ENCODE measurements at regions of chr9 and their contacts with region 1.

Region 1: DNA sequence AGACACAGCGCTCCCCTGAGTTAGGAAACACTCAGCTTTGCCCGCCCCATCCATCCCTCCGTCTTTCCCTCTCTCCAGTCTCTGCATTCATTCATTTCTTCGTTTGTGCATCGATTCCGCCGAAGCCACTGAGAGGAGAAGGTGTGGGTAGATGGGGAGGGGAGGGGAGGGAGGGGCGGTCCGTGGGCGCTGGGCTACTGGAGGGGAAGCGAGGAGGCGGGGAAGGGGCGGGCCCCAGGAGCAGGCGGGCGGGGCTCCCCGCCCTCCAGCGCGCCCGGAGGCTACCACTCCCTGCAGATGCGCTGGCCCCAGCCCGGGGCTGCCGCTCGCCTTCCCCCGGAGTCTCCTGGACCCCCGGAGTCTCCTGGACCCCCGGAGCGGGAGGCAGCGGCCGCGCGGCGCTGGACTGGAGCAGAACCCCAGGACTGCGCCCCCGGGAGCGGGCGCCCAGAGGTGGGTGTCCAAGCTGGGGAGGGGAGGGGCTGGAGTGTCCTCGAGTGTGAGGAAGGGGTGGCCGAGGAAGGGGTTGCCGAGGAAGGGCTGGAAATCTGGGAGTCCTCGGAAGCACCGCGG is 159.5 kb downstream of the C9orf152 start:
- DNase-seq: peak; percentile 79
- ATAC-seq: peak; percentile 91
- H3K4me3 ChIP-seq: peak overlapping the region; percentile 71
- H3K27ac ChIP-seq: peak overlapping the region; percentile 88
- H3K4me1 ChIP-seq: peaks cover 9% of the 10 kb centered on the region
- H3K27me3 ChIP-seq: no peaks in the 10 kb centered on the region
- CTCF ChIP-seq: no peak
- POLR2A ChIP-seq: peak; percentile 95
- RAD21 ChIP-seq: peak; percentile 9; the same call in 1 of the 2 replicates

Region 2: DNA sequence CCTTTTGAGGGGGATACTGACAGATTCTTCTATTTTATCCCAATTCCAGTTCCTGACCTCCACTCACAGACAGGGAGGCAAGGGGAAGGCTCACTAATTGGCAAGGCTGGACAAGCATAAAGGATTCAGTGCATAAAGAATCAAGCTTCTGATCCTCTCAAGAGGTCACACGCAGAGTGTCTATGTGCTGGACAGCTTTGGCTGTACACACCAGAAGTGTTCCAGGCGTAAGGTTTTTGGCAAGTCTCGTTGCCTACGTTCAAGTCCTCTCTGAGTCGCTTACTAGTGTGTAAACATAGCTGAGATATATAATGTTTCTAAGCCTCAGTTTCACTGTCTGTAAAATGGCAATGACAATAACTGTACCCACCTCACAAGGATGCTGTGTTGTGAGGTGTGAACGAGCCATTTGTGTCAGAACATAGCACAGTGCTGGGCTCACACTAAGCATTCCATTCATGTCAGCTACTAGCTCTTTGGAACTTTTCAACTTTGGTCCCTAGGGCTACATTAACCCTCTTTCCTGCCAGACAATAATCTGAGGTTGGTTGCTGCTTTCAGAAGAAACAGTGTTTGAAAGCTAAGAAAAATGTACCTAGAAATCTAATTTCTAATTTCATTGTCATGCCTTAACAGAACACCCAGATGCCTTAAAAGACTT is 216.4 kb before region 1 on chr9:
- CTCF ChIA-PET with region 1: no interaction called
- POLR2A ChIA-PET with region 1: no interaction called
- dilution Hi-C with region 1: no loop called
- in situ Hi-C with region 1: no loop called
- intact Hi-C with region 1: no loop called
- DNase-seq: no peak
- ATAC-seq: no peak
- H3K4me3 ChIP-seq: no peak overlapping the region
- H3K27ac ChIP-seq: no peak overlapping the region
- H3K4me1 ChIP-seq: peaks cover 2% of the 10 kb centered on the region; the same call in 1 of the 2 replicates
- H3K27me3 ChIP-seq: no peaks in the 10 kb centered on the region
- CTCF ChIP-seq: no peak
- POLR2A ChIP-seq: no peak
- RAD21 ChIP-seq: no peak

Region 3: DNA sequence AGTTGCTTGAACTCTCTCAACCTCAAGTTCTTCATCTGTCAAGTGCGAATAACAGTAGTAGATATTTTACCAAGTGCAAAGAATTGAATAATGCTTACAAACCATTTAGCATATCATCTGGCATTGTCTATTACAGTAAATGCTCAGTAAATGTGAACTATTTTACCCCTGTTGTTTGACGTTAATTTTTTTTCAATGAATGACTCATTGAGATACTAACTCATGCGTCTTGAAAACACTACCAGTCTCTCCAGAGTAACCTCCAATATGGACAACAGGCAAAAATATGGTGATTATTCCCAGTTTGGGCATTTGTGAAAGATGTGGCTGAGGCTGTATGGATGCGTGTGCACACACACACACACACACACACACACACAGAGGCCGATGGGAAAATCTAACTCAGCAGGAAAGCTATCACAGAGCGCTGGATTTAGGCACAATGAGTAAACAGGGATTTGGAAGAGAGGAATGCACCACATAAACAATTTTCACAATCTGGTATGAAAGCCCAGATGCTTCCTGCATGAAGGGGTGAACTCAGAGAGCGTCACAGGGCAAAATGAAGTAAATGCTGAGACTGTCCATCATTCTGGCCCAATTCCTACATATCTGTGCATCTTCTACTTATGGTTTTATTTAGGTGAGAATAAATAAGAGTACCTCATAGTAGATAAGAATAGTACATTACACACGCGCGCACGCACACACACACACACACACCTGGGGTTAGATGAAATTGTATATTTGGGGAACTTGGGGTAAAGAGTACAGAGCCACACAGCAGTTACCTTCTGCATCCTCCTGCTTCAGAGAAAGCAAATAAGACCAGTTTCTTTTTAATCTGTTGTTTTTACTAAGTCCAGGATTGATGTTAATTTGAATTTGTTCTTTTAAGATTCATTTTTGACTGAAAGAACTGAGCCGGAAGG is 139.8 kb before region 1 on chr9:
- CTCF ChIA-PET with region 1: no interaction called
- POLR2A ChIA-PET with region 1: interaction called, 4 read pairs
- dilution Hi-C with region 1: no loop called
- in situ Hi-C with region 1: loop called (anchors 5 kb)
- intact Hi-C with region 1: loop called (anchors 1 kb)
- DNase-seq: peak; percentile 96
- ATAC-seq: peak; percentile 62
- H3K4me3 ChIP-seq: no peak overlapping the region
- H3K27ac ChIP-seq: peak overlapping the region; percentile 76
- H3K4me1 ChIP-seq: peaks cover 34% of the 10 kb centered on the region
- H3K27me3 ChIP-seq: no peaks in the 10 kb centered on the region
- CTCF ChIP-seq: no peak
- POLR2A ChIP-seq: no peak
- RAD21 ChIP-seq: no peak

Region 4: DNA sequence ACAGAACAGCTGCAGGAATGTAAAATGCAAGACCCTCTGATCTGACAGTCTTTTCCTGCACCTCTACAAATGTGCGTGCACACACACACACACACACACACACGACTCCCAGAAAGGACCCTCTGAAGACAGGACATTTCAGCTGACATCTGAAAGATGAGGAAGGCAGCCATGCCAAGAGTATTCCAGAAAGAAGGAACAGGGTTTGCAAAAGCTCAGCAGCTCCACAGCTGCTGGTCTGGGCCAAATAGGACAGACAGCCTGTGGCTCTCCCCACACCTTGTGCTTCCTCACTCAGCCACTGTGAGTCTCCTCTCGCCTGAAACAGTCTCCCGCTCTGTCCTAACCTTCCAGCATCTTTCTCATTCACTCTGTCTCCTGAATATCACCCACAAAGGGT is 79.5 kb before region 1 on chr9:
- CTCF ChIA-PET with region 1: interaction called, 4 read pairs
- POLR2A ChIA-PET with region 1: no interaction called
- dilution Hi-C with region 1: no loop called
- in situ Hi-C with region 1: no loop called
- intact Hi-C with region 1: loop called (anchors 5 kb)
- DNase-seq: peak; percentile 54
- ATAC-seq: peak; percentile 79
- H3K4me3 ChIP-seq: no peak overlapping the region
- H3K27ac ChIP-seq: no peak overlapping the region; the same call in 1 of the 2 replicates
- H3K4me1 ChIP-seq: peaks cover 23% of the 10 kb centered on the region
- H3K27me3 ChIP-seq: no peaks in the 10 kb centered on the region
- CTCF ChIP-seq: peak; percentile 34; the same call in 1 of the 2 replicates
- POLR2A ChIP-seq: no peak
- RAD21 ChIP-seq: peak; percentile 45

Region 5: DNA sequence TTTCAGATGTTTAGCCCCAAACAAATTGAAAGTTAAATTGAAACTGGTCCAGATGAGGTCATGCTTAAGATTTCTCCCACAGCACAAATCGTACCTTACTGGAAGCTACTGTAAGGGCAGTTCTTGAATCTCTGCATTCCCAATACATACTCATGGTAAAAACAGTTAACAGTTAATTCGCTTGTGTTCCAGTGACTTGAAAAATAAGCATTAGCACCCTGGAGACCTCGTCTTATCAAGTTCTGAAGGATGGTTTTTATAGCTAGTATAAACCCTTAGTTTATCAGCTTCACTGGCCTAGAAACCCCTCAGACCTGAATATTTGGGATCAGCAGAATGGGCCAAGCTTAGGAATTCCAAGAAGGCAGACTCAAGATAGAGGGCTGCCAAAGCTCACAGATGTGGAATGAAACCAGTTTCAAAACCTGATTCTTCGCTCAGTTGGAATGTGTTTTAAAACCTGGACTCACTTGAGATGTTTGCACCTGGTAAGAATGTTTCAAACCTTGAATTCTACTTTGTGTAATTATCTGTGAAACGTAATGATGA is 55.8 kb after region 1 on chr9:
- CTCF ChIA-PET with region 1: no interaction called
- POLR2A ChIA-PET with region 1: no interaction called
- dilution Hi-C with region 1: no loop called
- in situ Hi-C with region 1: no loop called
- intact Hi-C with region 1: loop called (anchors 2 kb)
- DNase-seq: peak; percentile 85
- ATAC-seq: peak; percentile 27
- H3K4me3 ChIP-seq: no peak overlapping the region
- H3K27ac ChIP-seq: no peak overlapping the region
- H3K4me1 ChIP-seq: peaks cover 31% of the 10 kb centered on the region
- H3K27me3 ChIP-seq: no peaks in the 10 kb centered on the region
- CTCF ChIP-seq: no peak
- POLR2A ChIP-seq: no peak
- RAD21 ChIP-seq: no peak

Region 6: DNA sequence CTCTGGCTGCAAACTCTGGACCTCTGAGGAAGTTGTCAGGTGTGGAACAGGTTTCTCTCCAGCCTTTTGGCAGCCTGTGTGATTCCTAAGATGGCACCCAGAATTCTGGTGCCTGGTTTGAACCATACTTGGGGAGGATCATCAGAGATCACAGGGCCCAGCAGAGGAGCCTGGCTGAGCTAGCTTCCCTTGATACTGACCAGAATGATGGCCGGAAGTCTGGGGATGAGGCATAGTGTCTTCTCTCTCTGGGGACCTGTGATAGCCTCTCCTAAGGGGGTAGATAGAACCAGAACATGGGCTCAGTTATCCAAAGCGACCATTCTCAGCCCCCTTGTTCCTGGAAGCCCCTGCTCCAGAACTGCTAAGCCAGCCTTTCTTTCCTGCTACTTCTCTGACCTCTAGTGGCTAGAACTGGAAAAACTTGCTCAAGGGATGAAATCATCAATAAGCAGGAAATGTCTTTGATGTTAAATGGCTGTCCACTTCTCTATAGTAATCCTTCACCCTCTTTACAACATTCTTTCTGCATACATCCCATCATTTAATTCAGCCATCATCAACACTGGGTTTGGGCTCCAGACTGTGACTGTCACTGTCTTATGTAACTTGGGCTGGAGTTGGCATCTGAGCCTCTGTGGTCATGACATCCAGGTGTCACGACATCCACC is 104.3 kb after region 1 on chr9:
- CTCF ChIA-PET with region 1: interaction called, 3 read pairs
- POLR2A ChIA-PET with region 1: no interaction called
- dilution Hi-C with region 1: loop called (anchors 25 kb)
- in situ Hi-C with region 1: loop called (anchors 5 kb)
- intact Hi-C with region 1: no loop called
- DNase-seq: peak; percentile 72
- ATAC-seq: peak; percentile 48
- H3K4me3 ChIP-seq: no peak overlapping the region
- H3K27ac ChIP-seq: peak overlapping the region; percentile 24; the same call in 1 of the 2 replicates
- H3K4me1 ChIP-seq: peaks cover 28% of the 10 kb centered on the region
- H3K27me3 ChIP-seq: no peaks in the 10 kb centered on the region
- CTCF ChIP-seq: peak; percentile 76
- POLR2A ChIP-seq: no peak
- RAD21 ChIP-seq: peak; percentile 84

Measured in IMR-90 (cell line).